Right ventricle myocardium inferior (tissue), 1 donor: ENCODE measurements at regions of chr19 and their contacts with region 1.

Region 1: GRCh38 chr19:24086974-24087595 is at the start of gene ZNF254:
- DNase-seq: peak; percentile 90
- ATAC-seq: peak; percentile 100
- total RNA-seq, gene ZNF254: 9.0 TPM

Region 2: GRCh38 chr19:24033301-24033962 is 53.7 kb before region 1 on chr19:
- intact Hi-C with region 1: loop called (anchors 5 kb)
- DNase-seq: peak; percentile 92
- ATAC-seq: peak; percentile 99

Region 3: DNA sequence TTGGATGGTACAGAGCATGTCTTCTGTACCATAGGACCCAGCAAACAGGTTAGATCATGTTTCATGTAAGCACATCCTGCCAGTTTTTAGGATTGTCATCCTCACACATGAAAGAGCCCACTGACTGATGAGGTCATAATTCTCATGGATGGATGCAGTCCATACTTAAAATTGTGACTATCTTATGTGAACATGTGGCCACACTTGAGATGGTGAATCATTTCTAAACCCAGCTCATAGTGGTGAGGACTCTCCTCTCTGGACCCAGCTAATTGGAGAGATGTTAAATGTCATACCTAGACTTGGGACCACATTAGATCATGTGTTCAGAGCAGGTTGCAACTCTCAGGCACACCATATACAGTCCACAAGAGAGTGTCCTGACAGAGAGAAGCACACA is 24.9 kb before region 1 on chr19:
- intact Hi-C with region 1: no loop called
- DNase-seq: no peak
- ATAC-seq: no peak